Head of caudate nucleus (tissue), 42 donors: ENCODE measurements at regions of chr5 and their contacts with region 1.

Region 1: GRCh38 chr5:32232441-32233219 is 58.5 kb upstream of the GOLPH3 start:
- DNase-seq: peak; percentile 71 to 95 (median 88)

Region 2: GRCh38 chr5:32174011-32174870 is 58.4 kb before region 1 on chr5 and contains the start of gene GOLPH3:
- intact Hi-C with region 1: loop called (anchors 5 kb)
- DNase-seq: peak; percentile 80 to 97 (median 93)

Region 3: DNA sequence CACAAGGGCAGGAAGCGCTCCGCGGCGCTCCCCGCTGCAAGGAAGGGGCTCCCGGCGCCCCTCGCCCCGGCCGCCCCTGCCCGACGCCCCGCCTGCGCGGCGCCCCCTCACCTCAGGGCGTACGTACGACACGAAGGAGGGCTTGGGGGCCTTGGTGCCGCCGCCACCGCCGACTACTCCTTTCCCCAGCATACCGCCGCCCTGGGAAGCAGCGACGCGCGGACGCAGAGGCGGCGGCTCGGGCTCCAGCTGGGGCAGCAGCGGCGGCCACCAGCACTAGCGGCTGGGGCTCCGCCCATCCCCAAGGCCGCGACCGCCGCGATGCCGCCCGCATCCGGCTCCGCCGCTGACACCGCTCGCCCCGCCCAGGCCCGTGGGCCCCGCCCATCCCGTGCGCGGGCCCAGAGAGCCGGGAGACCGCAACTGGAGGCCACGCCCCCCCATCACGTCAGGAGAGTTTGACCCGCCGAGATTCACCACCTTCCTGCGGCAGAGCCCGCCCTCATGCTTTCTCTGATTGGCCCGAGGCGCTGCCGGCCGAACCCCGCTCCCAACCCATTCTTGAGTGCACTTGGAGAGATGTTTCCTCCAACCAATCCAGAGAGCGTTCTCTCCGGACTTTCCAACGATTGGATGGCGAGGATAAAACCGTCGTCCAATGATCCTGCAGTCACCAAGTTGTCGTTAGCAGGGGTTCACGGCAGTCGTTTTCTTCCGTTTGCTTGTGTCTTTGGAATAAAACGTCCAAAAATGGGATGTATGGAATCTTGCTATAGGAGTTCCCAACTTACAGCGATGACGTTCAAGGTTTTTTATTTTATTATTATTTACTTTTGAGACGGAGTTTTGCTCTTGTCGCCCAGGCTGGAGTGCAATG is 80.3 kb after region 1 on chr5 and contains the start of gene MTMR12:
- intact Hi-C with region 1: loop called (anchors 5 kb)
- DNase-seq: peak; percentile 99 to 100 (median 100)

Region 4: DNA sequence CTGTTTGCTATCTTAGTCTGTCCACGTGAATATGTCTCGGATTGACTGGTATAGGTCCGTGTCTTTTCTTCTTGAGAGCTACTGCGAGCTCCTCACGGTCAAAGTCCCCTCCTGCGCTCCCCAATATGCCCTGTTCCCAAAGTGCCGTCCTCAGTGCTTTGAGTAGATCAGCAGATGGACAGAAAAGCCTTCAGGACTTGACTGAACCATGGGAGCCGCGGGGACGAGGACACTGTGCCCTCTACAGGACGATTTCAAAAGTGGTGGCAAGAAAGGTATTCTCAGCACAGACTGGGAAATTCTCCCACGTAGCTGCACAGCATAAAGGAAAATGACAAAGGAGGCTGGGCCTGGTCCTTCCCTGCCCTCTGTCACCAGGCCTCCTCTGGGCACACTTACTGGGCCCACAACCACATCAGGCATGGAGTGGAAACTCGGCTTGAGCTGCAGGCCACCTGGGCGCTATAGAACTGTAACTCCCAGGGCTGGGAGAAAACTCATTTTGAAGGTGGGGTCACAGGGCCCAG is 96.7 kb after region 1 on chr5:
- intact Hi-C with region 1: loop called (anchors 5 kb)
- DNase-seq: peak; percentile 48 to 88 (median 72)

Region 5: GRCh38 chr5:32585446-32586275 is 353.0 kb after region 1 on chr5 and contains the start of gene SUB1:
- intact Hi-C with region 1: loop called (anchors 5 kb)
- DNase-seq: peak; percentile 91 to 98 (median 97)

Region 6: GRCh38 chr5:32613050-32613672 is 380.5 kb after region 1 on chr5:
- intact Hi-C with region 1: loop called (anchors 10 kb)
- DNase-seq: peak; percentile 53 to 95 (median 90)